ENCODE measurements at regions of chr1 and their contacts with region 1.

Region 1: GRCh38 chr1:228457396-228458176 is 29.6 kb upstream of the RNF187 start:
- DNase-seq: peak; percentile 100
- H3K4me3 Mint-ChIP-seq: peak overlapping the region; percentile 97
- H3K27ac Mint-ChIP-seq: peak overlapping the region; percentile 98
- H3K4me1 Mint-ChIP-seq: peaks cover 35% of the 10 kb centered on the region
- H3K27me3 Mint-ChIP-seq: no peaks in the 10 kb centered on the region
- CTCF ChIP-seq: peak; percentile 52

Region 2: DNA sequence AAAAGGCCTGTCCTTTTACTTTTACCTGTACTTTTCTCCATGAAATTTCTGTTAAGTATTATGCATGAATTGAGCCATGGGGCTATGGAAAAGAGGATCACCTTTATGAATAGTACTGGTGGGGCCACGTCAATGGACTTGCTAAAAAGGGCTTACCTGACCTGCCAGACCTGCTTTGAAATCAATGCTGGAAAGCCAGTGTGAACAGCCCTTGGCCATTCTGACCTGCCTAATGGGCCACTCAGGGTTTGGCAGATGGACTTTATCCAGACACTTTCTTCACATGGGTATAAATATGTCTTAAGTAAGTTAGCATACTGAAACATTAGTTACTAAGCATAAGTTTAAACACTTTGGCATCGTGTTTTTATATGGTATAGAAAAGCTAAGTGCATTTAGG is 325.8 kb before region 1 on chr1:
- CTCF ChIA-PET with region 1: interaction called, 17 read pairs
- POLR2A ChIA-PET with region 1: interaction called, 10 read pairs
- intact Hi-C with region 1: loop called (anchors 1 kb)
- DNase-seq: no peak
- H3K4me3 Mint-ChIP-seq: no peak overlapping the region
- H3K27ac Mint-ChIP-seq: no peak overlapping the region
- H3K4me1 Mint-ChIP-seq: peaks cover 10% of the 10 kb centered on the region
- H3K27me3 Mint-ChIP-seq: peaks cover 18% of the 10 kb centered on the region
- CTCF ChIP-seq: no peak

Region 3: DNA sequence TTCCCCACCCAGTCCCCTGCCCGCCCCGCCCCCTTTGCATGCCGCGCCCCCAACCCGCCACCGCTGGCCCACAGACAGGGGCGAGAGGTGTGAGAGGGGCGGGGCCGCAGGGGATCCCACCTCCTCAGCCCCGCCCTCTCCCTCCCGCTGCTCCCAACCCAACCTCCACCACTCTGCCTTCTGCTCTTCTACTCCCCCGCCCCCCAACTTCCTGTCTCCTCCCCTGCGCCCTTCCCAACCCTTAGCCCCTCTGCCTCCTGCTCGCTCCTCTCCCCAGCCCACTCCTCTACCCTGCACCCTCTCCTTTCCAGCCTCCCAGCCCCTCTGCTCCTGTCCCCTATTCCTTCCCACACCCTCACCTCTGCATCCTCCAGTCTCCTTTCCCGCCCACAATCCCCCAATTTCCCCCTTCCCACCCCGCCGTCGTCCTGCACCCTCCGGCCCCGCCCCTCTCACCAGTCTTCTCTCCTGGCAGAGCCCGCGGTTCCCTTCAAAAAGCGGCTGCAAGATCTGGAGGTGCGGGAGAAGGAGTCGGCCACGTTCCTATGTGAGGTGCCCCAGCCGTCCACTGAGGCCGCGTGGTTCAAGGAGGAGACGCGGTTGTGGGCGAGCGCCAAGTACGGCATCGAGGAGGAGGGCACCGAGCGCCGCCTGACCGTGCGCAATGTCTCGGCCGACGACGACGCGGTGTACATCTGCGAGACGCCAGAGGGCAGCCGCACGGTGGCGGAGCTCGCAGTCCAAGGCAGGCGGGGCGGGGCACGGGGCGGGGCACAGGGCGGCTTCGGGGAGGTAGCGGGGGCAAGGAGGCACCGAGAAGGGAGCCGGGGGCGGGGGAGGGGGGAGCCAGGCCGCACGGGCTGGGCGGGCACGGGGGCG is 244.4 kb before region 1 on chr1:
- CTCF ChIA-PET with region 1: interaction called, 17 read pairs
- POLR2A ChIA-PET with region 1: interaction called, 25 read pairs
- intact Hi-C with region 1: loop called (anchors 1 kb)
- DNase-seq: peak; percentile 92
- H3K4me3 Mint-ChIP-seq: peak overlapping the region; percentile 88
- H3K27ac Mint-ChIP-seq: peak overlapping the region; percentile 74
- H3K4me1 Mint-ChIP-seq: peaks cover 8% of the 10 kb centered on the region
- H3K27me3 Mint-ChIP-seq: no peaks in the 10 kb centered on the region
- CTCF ChIP-seq: peak; percentile 69

Region 4: GRCh38 chr1:228315945-228316588 is 141.5 kb before region 1 on chr1:
- CTCF ChIA-PET with region 1: no interaction called
- POLR2A ChIA-PET with region 1: no interaction called
- intact Hi-C with region 1: no loop called
- DNase-seq: no peak
- H3K4me3 Mint-ChIP-seq: no peak overlapping the region
- H3K27ac Mint-ChIP-seq: no peak overlapping the region
- H3K4me1 Mint-ChIP-seq: no peaks in the 10 kb centered on the region
- H3K27me3 Mint-ChIP-seq: no peaks in the 10 kb centered on the region
- CTCF ChIP-seq: no peak

Region 5: DNA sequence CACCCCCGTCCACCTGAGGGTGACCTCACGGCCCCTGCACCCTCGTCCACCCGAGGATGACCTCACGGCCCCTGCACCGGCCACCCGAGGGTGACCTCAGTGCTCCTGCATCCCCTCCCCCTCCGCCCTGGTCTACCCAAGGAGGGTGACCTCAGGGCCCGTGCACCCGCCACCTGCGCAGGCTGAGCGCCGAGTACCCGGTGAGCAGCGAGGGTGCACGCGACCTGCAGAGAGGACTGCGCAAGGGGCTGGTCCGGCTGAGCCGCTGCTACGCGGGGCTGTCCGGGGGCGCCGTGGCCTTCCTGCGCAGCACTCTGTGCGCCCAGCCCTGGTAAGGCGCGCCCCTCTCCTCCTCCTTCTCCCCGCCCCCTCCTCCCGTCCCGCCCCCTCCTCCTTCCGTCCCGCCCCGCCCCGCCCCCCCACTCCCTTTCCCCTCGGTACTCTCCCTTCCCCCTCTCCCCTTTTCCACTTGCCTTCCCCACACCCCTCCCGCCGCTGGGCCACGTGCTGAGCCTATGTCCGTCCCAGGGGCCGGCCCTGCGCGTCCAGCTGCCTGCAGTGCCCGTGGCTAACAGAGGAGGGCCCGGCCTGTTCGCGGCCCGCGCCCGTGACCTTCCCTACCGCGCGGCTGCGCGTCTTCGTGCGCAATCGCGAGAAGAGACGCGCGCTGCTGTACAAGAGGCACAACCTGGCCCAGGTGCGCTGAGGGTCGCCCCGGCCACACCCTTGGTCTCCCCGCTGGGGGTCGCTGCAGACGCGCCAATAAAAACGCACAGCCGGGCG is 79.3 kb before region 1 on chr1:
- CTCF ChIA-PET with region 1: interaction called, 7 read pairs
- POLR2A ChIA-PET with region 1: interaction called, 21 read pairs
- intact Hi-C with region 1: loop called (anchors 1 kb)
- DNase-seq: peak; percentile 88
- H3K4me3 Mint-ChIP-seq: peak overlapping the region; percentile 95
- H3K27ac Mint-ChIP-seq: peak overlapping the region; percentile 84
- H3K4me1 Mint-ChIP-seq: peaks cover 21% of the 10 kb centered on the region
- H3K27me3 Mint-ChIP-seq: no peaks in the 10 kb centered on the region
- CTCF ChIP-seq: peak; percentile 91

Region 6: GRCh38 chr1:228471762-228472398 is 14.3 kb after region 1 on chr1:
- CTCF ChIA-PET with region 1: interaction called, 9 read pairs
- POLR2A ChIA-PET with region 1: interaction called, 10 read pairs
- intact Hi-C with region 1: no loop called
- DNase-seq: peak; percentile 81
- H3K4me3 Mint-ChIP-seq: no peak overlapping the region
- H3K27ac Mint-ChIP-seq: no peak overlapping the region
- H3K4me1 Mint-ChIP-seq: peaks cover 6% of the 10 kb centered on the region
- H3K27me3 Mint-ChIP-seq: peaks cover 23% of the 10 kb centered on the region
- CTCF ChIP-seq: peak; percentile 70

Region 7: GRCh38 chr1:228515200-228515834 is 57.7 kb after region 1 on chr1:
- CTCF ChIA-PET with region 1: interaction called, 6 read pairs
- POLR2A ChIA-PET with region 1: interaction called, 4 read pairs
- intact Hi-C with region 1: loop called (anchors 2 kb)
- DNase-seq: peak; percentile 65
- H3K4me3 Mint-ChIP-seq: no peak overlapping the region
- H3K27ac Mint-ChIP-seq: no peak overlapping the region
- H3K4me1 Mint-ChIP-seq: peaks cover 9% of the 10 kb centered on the region
- H3K27me3 Mint-ChIP-seq: peaks cover 75% of the 10 kb centered on the region
- CTCF ChIP-seq: peak; percentile 97

Measured in MCF 10A (cell line).